ENCODE measurements at regions of chr9 and their contacts with region 1.

Region 1: DNA sequence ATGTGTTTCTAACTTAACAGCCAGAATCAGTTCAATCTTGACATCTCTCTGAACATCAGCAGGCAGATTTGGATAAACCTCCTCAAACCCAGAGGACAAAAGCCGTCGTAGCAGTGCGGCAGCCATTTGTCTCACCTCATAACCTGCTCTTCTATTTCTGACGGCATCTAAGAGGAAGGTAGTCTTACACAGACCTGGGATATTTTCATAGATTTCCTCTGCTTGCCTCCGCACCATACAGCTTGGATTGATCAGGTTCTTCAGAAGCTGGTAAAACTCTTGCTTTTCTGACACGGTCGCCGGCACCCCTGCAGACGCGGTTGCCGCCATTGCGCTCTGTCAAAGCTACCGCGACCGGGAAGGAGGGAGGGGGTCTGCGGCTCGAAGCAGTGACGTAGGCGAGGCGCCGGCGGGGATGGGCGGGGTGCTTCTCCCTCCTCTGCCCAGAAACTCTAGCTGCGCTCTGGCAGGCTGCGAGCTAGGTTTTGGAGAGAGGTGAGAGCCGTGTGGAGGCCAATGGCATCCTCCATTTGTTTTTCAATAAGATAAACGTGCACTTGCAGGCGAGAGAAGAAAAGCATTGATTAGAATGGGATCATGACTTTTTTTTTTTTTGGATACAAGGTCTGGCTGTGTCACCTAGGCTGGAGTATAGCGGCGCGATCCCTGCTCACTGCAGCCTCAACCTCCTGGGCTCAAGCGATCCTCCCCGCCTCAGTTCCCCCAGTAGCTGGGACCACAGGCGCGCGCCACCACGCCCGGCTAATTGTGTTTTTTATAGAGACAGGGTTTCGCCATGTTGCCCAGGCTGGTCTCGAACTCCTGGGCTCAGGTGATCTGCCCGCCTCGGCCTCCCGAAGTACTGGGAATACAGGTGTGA is at the start of gene RANBP6:
- DNase-seq: peak; percentile 97
- ATAC-seq: peak; percentile 94
- H3K4me3 Mint-ChIP-seq: peak within 1 kb of the TSS; percentile 95
- H3K27ac Mint-ChIP-seq: peak within 1 kb of the TSS; percentile 99
- H3K4me1 Mint-ChIP-seq: peaks cover 28% of the 10 kb centered on the region
- H3K27me3 Mint-ChIP-seq: no peaks in the 10 kb centered on the region
- total RNA-seq, gene RANBP6: 11.7 to 18.2 TPM

Region 2: GRCh38 chr9:5909976-5910375 is 105.5 kb before region 1 on chr9:
- CTCF ChIA-PET with region 1: no interaction called
- POLR2A ChIA-PET with region 1: no interaction called
- intact Hi-C with region 1: loop called in 1 of 2 experiments (anchors 2 kb)
- DNase-seq: no peak
- ATAC-seq: peak; percentile 80
- H3K4me3 Mint-ChIP-seq: peak overlapping the region; percentile 50
- H3K27ac Mint-ChIP-seq: peak overlapping the region; percentile 92
- H3K4me1 Mint-ChIP-seq: peaks cover 18% of the 10 kb centered on the region
- H3K27me3 Mint-ChIP-seq: no peaks in the 10 kb centered on the region

Measured in activated CD4-positive, alpha-beta T cell treated with anti-CD3 and anti-CD28 coated beads for 36 hours (primary cell).